Posterior vena cava (tissue), 2 donors: ENCODE measurements at regions of chr6 and their contacts with region 1.

Region 1: DNA sequence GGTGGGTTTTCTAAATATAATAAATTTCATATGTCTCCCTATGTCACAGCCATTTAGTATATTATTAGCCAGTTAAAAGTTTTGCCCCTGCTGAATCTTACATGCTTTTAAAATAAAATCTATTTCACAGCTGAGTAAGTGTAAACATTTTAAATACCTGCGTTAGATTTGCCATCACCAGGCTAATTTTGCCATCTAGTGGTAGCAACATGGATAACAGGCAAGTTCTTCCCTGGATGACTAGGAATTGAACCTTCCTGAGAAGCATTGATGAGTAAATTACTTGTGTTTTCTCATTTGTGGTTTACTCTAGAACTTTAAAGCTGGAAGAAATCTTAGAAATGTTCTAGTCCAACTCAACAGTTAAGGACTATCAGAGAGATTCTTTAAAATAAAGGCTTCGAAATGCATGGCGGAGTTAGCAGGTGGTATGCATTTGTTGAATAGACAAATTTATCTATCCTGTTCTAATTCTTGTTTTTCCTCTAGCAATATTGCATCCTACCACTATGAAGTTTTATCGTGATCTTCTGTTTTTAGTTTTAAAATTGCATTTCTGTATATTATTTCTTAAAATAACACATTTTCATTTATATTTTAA is 2.6 kb downstream of the PRSS35 start:
- DNase-seq: no peak

Region 2: DNA sequence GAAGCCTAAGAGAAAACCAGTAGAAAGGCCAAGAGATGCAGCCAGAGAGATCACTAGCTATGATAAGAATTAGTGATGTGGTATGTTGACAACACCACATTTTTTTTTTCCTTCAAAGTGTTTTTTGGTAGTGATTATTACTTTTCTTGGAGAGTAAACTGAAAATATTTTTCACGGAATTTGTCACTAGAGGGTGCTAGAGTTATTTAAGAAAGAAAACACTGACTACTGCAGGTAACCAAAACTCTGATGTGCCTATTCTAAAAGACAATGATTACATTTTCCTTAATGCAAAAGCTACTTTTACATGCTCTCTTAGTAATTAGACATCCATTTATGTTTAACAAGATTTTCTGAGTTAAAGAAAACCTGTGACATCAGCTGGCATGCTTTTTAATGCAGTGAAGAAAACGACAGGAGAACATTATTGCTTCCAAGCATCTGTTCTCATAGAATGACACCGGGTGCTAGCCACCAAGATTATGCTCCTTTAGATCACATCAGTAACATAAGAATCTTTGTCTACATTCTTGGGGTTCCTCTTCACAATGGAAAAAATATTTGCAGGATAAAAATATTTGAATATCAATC is 293.0 kb before region 1 on chr6:
- intact Hi-C with region 1: loop called in 1 of 2 experiments (anchors 2 kb)
- DNase-seq: no peak

Region 3: DNA sequence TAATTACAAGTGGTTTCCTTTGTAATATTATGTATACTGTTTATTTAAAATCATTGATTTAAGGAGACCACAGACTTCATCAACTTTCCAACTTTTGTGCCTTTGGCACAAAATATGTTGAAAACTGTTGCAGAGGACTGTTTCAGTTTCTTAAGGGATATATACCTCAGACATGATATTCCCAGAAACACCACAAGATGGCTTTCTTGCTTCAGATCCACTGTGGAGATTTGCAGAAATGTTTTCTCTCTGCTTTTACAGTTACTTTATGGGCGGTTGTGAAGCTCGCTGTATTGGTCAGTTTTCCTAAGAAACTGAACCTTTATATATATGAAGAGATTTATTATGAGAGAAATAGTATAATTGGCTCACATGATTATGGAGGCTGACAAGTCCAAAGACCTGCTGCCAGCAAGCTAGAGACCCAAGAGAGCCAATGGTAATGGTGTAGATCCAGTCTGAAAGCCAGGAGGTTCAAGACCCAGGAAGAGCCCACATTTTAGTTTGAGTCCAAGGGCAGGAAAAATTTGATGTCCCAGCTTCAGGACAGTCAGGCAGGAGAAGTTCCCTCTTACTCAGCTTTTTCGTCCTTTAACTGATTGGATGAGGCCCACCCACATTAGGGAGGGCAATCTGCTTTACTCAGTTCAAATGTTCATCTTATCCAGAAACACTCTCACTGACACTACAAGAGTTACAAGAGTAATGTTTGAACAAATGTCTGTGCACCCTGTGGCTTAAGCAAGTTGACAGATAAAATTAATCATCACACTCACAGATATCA is 96.9 kb before region 1 on chr6:
- intact Hi-C with region 1: loop called in 1 of 2 experiments (anchors 10 kb)
- DNase-seq: no peak

Region 4: DNA sequence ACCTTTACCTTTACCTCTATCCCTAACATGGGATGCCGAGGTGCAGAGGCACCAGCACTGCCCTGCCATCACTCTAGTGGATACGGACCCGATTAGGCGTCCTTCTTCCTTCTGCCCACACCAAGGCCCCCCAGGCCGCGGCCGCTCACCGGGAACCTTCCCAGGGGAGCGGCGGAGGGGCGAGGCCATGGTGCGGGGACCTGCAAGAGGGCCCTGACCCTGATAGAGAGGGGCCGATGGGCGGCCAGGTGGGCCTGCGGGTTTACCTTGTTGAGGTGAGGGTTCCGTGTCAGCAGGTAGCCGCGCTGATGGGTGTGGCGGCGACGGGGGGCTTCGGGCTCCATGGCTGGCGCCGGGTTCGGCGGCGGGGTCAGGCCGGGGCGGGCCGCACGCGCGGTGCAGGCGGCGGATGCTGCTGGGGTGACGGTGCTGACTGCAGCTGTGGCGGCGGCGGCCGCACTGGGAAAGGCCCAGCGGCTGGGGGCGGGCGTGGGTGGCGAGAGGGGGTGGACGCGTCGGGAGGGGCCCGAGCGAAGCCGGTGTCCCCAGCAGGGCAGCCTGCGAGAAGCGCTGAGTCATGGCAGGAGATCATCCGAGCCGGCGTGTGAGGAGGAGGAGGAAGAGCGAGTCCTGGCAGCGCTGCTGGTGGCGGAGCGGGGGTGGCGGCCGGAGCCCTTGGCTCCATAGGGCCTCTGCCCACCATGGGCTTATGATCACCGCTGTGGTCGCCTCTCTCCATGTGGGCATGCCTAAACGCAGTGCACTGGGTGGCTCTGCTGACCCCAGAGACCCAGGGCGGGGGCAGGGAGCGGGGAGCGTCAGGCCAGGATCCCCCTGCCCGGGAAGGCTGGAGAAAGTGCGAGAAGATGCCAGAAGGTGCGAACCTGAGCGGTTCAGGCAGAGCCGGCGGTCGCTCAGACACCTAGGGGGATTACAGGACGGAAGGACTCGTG is 84.1 kb before region 1 on chr6 and contains the start of gene ME1:
- intact Hi-C with region 1: loop called in 1 of 2 experiments (anchors 5 kb)
- DNase-seq: peak; percentile 93
- total RNA-seq, gene ME1: 12.8 to 14.5 TPM

Region 5: DNA sequence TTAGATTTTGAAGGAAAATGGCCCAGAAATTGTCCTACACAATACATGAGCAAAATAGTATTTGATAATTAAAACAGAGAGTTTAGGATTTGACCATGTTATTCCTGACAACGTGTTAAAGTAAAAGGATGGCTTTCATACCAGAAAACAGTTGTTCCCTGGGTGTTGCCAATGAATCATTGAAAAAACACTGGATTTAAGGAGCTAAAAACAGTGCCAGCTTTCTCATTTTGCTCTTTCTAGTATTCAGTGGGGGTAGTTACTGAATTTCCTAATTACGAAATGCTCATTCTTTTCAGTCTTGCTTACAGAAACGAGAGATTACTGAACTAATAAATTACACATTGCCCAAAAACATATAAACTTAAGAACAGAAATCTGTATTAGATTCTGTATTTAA is 220.5 kb after region 1 on chr6:
- intact Hi-C with region 1: no loop called
- DNase-seq: no peak